ENCODE measurements at regions of chr13 and their contacts with region 1.

Region 1: DNA sequence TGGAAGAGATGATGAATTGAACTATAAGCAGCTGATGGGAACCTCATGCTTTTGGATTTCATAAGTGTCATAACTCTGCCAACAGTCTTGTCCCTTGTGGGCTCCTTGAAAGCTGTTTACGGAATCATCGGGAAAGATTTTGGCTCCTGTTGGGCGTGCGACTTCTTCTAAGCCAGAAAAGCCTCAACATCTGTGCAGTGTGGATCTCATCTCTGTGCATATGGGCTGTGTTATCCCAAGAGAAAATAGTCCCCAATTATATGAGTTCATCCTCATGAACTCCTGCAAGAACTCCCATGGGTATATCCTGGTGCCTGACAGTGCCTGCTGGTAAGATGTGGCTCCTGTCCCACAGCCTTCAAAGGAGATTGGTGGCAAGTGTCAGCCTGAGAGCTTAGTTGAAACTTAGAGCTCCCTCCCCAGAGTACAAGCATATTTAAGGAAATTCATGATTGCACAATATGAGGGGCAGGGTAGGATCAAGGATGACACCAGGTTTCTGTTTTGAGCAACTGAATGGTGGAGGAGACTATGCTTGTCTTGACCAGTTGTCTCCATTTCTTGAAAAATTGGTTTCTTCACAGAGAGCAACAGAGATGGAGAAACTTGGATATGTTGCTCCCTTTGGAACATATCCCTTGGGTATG is 243.5 kb downstream of the ITGBL1 start:
- DNase-seq: no peak
- H3K4me3 ChIP-seq: no peak overlapping the region
- H3K27ac ChIP-seq: no peak overlapping the region
- H3K4me1 ChIP-seq: peaks cover 0 to 27% (median 16%) of the 10 kb centered on the region in 4 donors
- H3K27me3 ChIP-seq: no peaks in the 10 kb centered on the region
- CTCF ChIP-seq: no peak
- EP300 ChIP-seq: no peak
- POLR2A ChIP-seq: no peak

Region 2: DNA sequence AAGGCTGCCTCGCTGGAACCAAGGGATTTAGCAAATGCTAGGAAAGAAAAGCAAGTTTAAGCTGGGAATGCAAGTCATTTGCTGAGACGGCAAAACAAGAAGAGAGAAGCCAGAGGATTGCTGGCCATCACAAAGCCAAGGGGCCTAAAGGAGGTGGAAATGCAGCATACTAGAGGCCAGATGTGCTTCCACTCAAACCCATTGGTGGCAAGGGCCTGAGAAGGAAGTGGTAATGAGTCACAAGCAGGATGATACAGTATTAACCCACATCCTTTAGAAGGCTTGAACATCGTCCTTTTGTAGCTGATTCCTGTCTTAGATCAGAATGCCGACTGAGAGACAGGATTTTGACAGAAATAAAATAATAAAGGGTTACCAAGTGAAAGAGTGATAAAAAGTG is 175.3 kb before region 1 on chr13:
- intact Hi-C with region 1: loop called (anchors 10 kb)
- DNase-seq: no peak
- H3K4me3 ChIP-seq: no peak overlapping the region
- H3K27ac ChIP-seq: no peak overlapping the region
- H3K4me1 ChIP-seq: no peaks in the 10 kb centered on the region
- H3K27me3 ChIP-seq: no peaks in the 10 kb centered on the region
- CTCF ChIP-seq: no peak
- EP300 ChIP-seq: no peak
- POLR2A ChIP-seq: no peak